Pancreas (tissue), 10 donors: ENCODE measurements at regions of chr17 and their contacts with region 1.

Region 1: DNA sequence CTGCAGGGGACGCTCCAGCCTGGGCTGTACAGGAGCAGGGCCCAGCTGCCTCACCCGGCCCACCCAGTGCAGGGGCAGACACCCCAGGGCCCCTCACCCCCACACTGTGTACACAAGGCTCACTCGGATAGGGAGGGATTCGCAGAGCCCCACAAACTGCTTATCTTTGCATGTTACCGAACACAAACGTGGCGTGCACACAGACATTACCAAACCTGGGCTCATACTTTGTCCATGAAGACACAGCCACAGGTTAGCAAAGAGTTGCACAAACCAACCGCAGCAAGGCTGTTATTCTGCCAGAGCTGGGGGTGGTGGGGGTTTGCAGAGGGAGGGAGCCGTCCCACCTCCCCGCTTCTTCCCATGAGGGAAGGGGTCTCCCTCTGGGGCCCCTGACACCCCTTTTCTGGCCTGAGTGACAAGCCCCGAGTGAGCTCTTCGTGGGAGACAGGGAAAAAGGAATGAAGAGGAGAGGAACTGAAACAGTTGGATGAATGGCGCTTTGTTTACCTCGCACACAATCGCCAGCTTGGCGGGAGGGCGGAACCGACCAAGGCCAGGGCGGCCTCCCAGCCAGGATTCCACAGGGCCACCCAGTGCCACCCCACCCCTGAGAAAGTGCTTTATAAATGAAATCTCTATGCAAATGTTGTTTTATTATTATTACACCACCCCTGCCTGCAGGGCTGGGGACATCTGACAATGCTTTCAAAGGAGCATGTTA is 434 bp upstream of the CPSF4L start:
- DNase-seq: peak; percentile 78 to 88 (median 79)
- ATAC-seq: peak; percentile 85 to 92 (median 92)
- H3K4me3 ChIP-seq: peak overlapping the region in 1 of 4 donors; percentile 12
- H3K27ac ChIP-seq: peak overlapping the region; percentile 85 to 97 (median 94)
- H3K4me1 ChIP-seq: peaks cover 25 to 28% (median 25%) of the 10 kb centered on the region in 3 donors
- H3K27me3 ChIP-seq: no peaks in the 10 kb centered on the region
- CTCF ChIP-seq: no peak

Region 2: GRCh38 chr17:73304971-73305812 is 43.1 kb after region 1 on chr17:
- intact Hi-C with region 1: loop called in 1 of 3 experiments (anchors 5 kb)
- DNase-seq: peak in 4 of 6 donors; percentile 43 to 68 (median 56)
- ATAC-seq: peak in 3 of 4 donors; percentile 2 to 24 (median 5)
- H3K4me3 ChIP-seq: peak overlapping the region in 2 of 4 donors; percentile 24 to 40
- H3K27ac ChIP-seq: peak overlapping the region; percentile 43 to 99 (median 95)
- H3K4me1 ChIP-seq: peaks cover 40 to 63% (median 48%) of the 10 kb centered on the region in 3 donors
- H3K27me3 ChIP-seq: no peaks in the 10 kb centered on the region
- CTCF ChIP-seq: no peak

Region 3: DNA sequence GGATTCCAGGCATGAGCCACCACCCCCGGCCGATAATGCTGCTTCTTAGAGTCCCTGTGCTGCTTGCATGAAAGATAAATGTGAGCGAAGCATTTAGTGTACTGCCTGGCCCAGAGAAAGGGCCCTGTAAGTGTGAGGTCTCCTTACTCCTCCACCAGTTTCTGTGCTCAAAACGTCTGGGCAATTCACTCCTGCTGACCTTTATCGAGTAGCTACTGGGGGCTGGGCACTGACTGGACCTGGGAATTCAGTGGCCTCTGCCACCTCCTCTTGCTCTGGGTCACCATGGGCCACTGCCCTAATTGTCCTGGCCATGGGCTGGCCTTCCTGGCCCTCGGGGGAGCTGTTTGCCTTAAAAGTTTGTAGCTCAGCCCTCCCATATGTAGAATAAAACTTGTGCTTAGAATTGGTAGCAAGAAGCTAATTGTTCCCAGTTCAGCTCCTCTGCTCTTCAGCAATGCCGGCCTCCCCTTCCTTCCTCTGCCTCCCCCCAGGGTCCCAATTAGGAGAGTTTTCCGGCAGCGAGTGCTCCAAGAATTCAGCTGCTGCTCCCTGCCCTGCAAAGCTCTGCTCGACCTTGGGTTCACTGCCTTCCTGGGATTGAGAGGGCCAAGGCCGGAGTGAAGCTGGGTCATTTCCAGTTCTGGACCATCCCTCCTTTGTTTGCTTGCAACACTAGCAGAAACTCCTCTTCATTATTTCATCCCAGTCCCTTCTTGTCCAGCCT is 148.6 kb after region 1 on chr17:
- intact Hi-C with region 1: no loop called
- DNase-seq: no peak
- ATAC-seq: no peak
- H3K4me3 ChIP-seq: no peak overlapping the region
- H3K27ac ChIP-seq: no peak overlapping the region
- H3K4me1 ChIP-seq: no peaks in the 10 kb centered on the region
- H3K27me3 ChIP-seq: no peaks in the 10 kb centered on the region
- CTCF ChIP-seq: no peak